A673 (cell line): ENCODE measurements at regions of chr4 and their contacts with region 1.

Region 1: GRCh38 chr4:158741326-158742025 is 18.3 kb upstream of the PPID start:
- DNase-seq: no peak
- H3K4me3 ChIP-seq: no peak overlapping the region
- H3K27ac ChIP-seq: no peak overlapping the region
- H3K4me1 ChIP-seq: no peaks in the 10 kb centered on the region
- H3K27me3 ChIP-seq: no peaks in the 10 kb centered on the region
- CTCF ChIP-seq: no peak

Region 2: GRCh38 chr4:158376106-158376840 is 365.2 kb before region 1 on chr4:
- CTCF ChIA-PET with region 1: no interaction called
- POLR2A ChIA-PET with region 1: interaction called, 10 read pairs
- intact Hi-C with region 1: no loop called
- DNase-seq: no peak
- H3K4me3 ChIP-seq: no peak overlapping the region
- H3K27ac ChIP-seq: no peak overlapping the region
- H3K4me1 ChIP-seq: no peaks in the 10 kb centered on the region
- H3K27me3 ChIP-seq: no peaks in the 10 kb centered on the region
- CTCF ChIP-seq: no peak

Region 3: GRCh38 chr4:159778298-159778697 is 1036.8 kb after region 1 on chr4:
- CTCF ChIA-PET with region 1: no interaction called
- POLR2A ChIA-PET with region 1: no interaction called
- intact Hi-C with region 1: no loop called
- DNase-seq: no peak
- H3K4me3 ChIP-seq: peak overlapping the region; percentile 55
- H3K27ac ChIP-seq: peak overlapping the region; percentile 94
- H3K4me1 ChIP-seq: peaks cover 48% of the 10 kb centered on the region
- H3K27me3 ChIP-seq: no peaks in the 10 kb centered on the region
- CTCF ChIP-seq: no peak